Activated naive CD8-positive, alpha-beta T cell treated with anti-CD3 and anti-CD28 coated beads, Interleukin-2, amount 10 ng/mL, durations not matched to agents 7 days and 5 days (primary cell): ENCODE measurements at regions of chr17 and their contacts with region 1.

Region 1: DNA sequence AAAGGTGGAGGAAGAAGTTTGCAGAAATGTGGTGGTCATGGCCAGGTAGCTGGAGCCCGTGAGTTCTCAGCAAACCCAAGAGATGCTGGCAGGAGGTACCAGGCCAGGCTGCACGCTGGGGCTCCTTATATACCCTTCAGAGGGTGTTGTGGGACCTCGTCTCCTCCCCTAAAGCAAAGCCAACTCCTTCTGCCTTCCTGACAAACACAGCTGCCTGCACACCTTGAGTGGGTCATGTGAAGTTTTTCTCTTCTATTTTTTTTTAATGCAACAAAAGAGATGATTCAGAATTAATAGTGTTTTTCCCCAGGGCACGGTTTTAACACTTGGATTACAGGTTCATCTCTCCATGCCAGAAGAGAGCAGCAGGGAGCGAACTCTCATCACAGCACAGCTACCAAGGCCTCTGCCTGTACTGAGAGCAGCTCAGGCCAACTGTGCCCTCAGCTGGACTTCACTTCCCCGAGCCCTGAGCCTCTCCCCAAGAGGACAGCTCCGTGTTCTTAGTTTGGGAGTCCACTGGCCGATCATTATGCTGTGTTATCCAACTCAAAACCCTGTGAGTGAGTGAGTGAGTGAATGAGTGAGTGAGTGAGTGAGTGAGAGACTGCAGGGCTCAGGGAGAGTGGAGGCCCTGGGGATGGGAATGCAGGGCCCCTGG is at the start of gene KRT15:
- DNase-seq: no peak
- ATAC-seq: no peak
- H3K4me3 Mint-ChIP-seq: no peak within 1 kb of the TSS
- H3K27ac Mint-ChIP-seq: no peak within 1 kb of the TSS
- H3K4me1 Mint-ChIP-seq: no peaks in the 10 kb centered on the region
- H3K27me3 Mint-ChIP-seq: no peaks in the 10 kb centered on the region
- total RNA-seq, gene KRT15: not detected

Region 2: GRCh38 chr17:41483991-41484826 is 34.7 kb before region 1 on chr17:
- POLR2A ChIA-PET with region 1: no interaction called
- DNase-seq: no peak
- ATAC-seq: no peak
- H3K4me3 Mint-ChIP-seq: no peak overlapping the region
- H3K27ac Mint-ChIP-seq: no peak overlapping the region
- H3K4me1 Mint-ChIP-seq: no peaks in the 10 kb centered on the region
- H3K27me3 Mint-ChIP-seq: peaks cover 2% of the 10 kb centered on the region

Region 3: DNA sequence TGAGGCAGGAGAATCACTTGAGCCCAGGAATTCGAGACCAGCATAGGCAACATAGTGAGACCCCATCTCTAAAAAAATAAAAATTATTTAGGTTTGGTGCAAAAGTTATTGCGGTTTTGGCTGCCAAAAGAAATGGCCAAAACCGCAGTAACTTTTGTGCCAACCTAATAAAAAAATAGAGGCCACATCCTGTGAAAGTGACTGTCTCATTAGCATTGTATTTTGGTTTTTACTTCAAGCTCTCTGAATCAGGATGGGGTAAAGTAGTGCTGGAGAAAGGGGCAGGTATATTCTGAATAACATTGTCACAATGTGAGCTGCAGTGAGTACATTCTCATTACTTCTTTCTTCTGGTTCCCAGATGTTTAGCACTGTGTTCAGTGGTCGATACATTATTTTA is 975.8 kb after region 1 on chr17:
- POLR2A ChIA-PET with region 1: interaction called, 12 read pairs
- DNase-seq: no peak
- ATAC-seq: no peak
- H3K4me3 Mint-ChIP-seq: no peak overlapping the region
- H3K27ac Mint-ChIP-seq: no peak overlapping the region
- H3K4me1 Mint-ChIP-seq: peaks cover 13% of the 10 kb centered on the region
- H3K27me3 Mint-ChIP-seq: peaks cover 3% of the 10 kb centered on the region